ENCODE measurements at regions of chr9 and their contacts with region 1.

Region 1: DNA sequence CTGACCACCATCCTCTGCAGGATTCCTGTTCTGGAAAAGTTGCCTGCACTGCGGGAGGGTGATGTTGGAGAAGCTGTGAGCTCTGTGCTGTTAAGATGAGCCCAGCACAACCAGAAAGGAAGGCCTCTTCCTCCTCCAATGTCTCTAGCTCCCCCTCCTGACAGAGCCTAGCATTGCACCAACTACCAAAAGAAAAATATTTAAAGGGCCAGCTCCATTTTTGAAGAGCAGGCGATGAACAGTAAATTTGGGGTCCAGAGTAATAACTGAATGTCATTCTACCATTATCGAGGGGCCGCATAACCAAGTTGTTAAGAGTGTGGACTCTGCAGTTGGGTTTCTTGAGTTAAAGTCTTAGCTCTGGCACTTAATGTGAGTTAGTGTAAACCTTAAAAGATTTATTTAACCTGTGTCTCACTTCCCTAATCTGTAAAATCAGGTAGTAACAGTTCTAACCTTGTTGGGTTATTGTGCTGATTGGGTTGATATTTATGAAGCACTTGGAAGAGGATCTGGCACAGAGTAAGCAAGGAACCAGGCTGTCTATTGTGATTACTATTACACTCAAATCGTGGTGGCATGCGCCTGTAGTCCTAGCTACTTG is 3.9 kb downstream of the TEX53 start:
- DNase-seq: peak; percentile 85
- H3K4me3 Mint-ChIP-seq: no peak overlapping the region
- H3K27ac Mint-ChIP-seq: peak overlapping the region; percentile 36
- H3K4me1 Mint-ChIP-seq: peaks cover 21% of the 10 kb centered on the region
- H3K27me3 Mint-ChIP-seq: no peaks in the 10 kb centered on the region

Region 2: GRCh38 chr9:114385412-114386181 is 268.1 kb before region 1 on chr9:
- CTCF ChIA-PET with region 1: interaction called, 12 read pairs
- POLR2A ChIA-PET with region 1: interaction called, 4 read pairs
- DNase-seq: peak; percentile 93
- H3K4me3 Mint-ChIP-seq: peak overlapping the region; percentile 100
- H3K27ac Mint-ChIP-seq: peak overlapping the region; percentile 98
- H3K4me1 Mint-ChIP-seq: peaks cover 58% of the 10 kb centered on the region
- H3K27me3 Mint-ChIP-seq: no peaks in the 10 kb centered on the region

Region 3: DNA sequence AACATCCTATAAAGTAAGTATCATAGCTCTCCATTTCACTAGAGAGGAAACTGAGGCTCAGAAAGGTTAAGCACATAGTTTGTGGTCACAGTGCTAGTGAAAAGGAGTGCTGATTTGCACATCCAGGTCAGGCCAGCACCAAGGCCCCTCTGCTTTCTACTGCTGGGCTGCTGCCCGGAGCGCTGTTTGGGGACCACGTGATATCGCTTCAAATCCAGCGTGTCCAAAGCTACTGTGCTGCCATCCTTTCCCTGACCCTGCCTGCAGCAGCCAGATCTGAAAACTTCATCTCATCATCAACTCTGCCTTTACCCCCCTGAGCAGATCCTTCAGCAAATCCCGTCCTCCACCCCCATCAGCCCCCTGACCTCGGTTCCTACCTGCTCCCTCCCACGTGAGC is 225.2 kb before region 1 on chr9:
- CTCF ChIA-PET with region 1: interaction called, 54 read pairs
- POLR2A ChIA-PET with region 1: no interaction called
- DNase-seq: no peak
- H3K4me3 Mint-ChIP-seq: no peak overlapping the region
- H3K27ac Mint-ChIP-seq: no peak overlapping the region
- H3K4me1 Mint-ChIP-seq: peaks cover 3% of the 10 kb centered on the region
- H3K27me3 Mint-ChIP-seq: peaks cover 4% of the 10 kb centered on the region

Region 4: DNA sequence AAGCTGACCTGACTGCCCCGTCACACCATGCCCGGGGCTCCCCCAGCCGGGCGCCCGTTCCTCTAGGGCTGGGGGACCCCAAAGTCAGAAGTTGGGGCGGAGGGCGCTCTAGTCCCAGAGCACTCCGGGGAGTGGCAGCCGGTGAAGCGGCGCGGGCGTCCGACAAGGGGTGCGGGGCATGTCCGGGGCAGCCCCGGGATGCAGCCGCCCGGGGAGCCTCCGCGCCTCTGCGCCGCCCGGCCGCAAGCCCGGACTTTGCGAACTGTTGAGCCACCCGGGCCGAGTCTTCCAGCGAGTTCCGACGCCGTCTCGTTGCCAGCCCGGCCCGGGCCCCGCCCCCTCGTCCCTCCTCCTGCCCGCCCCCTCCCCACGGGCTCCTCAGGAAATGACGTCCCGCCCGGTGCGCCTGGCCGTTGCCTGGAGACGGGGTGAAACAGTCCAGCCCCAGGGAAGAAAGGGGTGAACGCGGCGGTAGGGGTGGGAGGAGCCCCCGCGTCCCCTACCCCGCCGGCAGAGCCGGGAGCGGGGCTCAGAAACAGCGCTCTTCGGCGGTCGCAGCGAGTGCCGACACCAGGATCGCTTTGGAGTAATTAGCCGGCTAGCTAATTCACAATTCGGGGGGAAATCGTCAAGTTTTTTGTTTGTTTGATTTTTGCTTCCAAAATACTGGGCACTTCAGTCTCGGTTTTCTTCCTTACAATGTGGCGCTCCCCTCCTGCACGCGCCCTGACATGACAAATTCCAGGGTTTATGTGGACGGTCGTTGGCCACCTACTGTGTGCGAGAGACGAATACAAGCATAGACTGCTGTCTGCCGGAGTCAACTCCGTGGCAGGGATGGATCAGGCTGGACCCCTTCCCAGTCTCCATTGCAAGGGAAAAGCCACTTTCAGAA is 148.2 kb before region 1 on chr9 and contains the start of gene WHRN:
- CTCF ChIA-PET with region 1: interaction called, 27 read pairs
- POLR2A ChIA-PET with region 1: interaction called, 3 read pairs
- DNase-seq: peak; percentile 89
- H3K4me3 Mint-ChIP-seq: peak within 1 kb of the TSS; percentile 73
- H3K27ac Mint-ChIP-seq: no peak within 1 kb of the TSS
- H3K4me1 Mint-ChIP-seq: peaks cover 31% of the 10 kb centered on the region
- H3K27me3 Mint-ChIP-seq: peaks cover 60% of the 10 kb centered on the region
- total RNA-seq, gene WHRN: 4.5 to 4.8 TPM

Region 5: DNA sequence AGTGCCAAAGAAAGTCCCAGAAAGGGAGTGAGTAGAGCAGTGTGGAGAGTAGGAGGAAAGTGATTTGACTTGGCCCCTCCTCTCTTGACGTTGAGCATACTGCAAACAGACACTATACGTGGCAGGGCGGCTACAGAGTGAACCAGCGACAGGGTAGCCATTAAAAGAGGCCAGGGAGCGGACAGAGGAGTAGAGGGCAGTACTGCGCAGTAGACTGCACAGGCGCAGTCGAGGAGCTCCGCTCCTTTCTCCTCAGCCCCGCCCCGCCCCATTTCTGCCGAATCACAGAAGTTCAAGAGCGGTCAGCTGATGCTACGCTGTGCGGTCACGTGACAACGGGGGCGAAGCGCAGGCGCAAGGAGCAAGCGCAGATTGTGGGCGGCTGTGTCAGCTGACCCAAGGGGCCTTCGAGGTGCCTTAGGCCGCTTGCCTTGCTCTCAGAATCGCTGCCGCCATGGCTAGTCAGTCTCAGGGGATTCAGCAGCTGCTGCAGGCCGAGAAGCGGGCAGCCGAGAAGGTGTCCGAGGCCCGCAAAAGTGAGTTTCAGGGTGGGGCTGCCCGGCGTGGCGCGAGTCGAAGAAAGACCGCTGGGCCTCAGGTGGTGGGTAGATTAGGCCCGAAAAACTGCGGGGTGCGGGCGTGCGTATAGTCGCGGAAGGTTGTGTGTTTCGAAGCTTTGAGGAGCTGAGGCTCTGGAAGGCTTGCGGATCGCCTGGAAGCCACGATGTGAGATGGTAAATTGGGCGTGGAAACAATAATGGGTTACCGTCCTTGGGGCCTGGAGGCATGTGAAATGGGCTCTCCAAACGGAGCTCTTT is 66.1 kb before region 1 on chr9 and contains the start of gene ATP6V1G1:
- CTCF ChIA-PET with region 1: interaction called, 121 read pairs
- POLR2A ChIA-PET with region 1: interaction called, 31 read pairs
- DNase-seq: peak; percentile 99
- H3K4me3 Mint-ChIP-seq: peak within 1 kb of the TSS; percentile 94
- H3K27ac Mint-ChIP-seq: peak within 1 kb of the TSS; percentile 92
- H3K4me1 Mint-ChIP-seq: peaks cover 49% of the 10 kb centered on the region
- H3K27me3 Mint-ChIP-seq: no peaks in the 10 kb centered on the region
- total RNA-seq, gene ATP6V1G1: 92.4 to 94.2 TPM

Region 6: DNA sequence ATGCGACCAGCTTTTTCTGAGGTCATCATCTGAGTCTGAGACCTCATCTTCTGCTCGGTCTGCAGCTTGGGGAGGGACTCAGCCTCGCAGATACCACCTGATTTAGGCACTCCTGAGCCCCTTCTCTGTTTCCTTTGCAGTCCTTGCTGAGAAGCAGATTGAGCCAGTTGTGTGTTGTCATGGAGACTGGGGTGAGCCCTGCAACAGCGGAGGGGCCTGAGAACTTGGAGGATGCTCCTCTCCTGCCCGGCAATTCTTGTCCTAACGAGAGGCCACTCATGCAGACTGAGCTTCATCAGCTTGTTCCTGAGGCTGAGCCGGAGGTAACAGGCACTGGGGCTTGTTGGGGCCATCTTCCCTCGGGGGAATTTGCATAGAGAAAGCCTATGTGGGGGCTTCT is 15.3 kb before region 1 on chr9:
- CTCF ChIA-PET with region 1: interaction called, 16 read pairs
- POLR2A ChIA-PET with region 1: interaction called, 3 read pairs
- DNase-seq: no peak
- H3K4me3 Mint-ChIP-seq: no peak overlapping the region
- H3K27ac Mint-ChIP-seq: no peak overlapping the region
- H3K4me1 Mint-ChIP-seq: no peaks in the 10 kb centered on the region
- H3K27me3 Mint-ChIP-seq: no peaks in the 10 kb centered on the region

Region 7: DNA sequence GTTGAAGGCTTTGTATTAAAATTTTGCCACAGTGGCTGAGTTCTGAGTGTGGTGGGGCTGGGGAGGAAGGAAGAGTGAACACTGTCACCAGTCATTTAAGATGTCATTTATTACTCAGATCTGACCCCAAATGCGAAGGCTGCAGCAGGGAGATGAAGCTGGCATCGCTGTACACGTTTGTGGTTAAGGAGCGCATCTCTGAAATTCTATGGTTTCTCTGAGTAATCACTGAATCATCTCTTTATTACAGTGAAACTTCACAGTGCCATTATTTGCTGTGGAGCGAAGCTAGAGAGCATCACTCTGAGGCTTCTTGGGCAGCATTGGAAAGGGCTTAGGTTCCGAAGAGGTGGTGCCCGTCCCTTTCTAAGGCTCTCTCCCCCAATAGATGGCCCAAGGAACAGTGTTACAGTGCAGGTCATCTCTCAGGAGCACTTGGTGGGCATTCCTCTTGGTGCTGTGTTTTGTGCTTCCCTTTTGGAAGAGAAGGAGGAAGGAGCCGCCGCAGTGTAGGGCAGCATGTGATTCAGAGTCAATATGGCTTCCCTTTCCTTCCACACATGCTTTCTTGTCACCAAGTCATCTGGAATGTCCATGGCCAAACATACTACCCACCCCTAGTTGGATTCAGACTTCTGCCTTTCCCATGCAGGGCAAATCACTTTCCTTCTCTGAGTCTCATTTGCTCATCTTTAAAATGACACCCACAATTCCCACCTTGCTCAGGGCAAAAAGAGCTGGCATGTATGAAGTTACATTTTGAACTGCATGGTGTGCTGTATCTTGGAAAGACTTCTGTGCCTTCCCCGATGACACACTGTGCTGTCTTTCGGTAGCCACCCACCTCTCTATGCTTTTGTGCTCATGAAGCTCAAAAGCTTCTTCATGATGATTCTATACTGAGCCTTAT is 37.6 kb after region 1 on chr9:
- CTCF ChIA-PET with region 1: no interaction called
- POLR2A ChIA-PET with region 1: no interaction called
- DNase-seq: peak; percentile 87
- H3K4me3 Mint-ChIP-seq: peak overlapping the region; percentile 26
- H3K27ac Mint-ChIP-seq: peak overlapping the region; percentile 93
- H3K4me1 Mint-ChIP-seq: peaks cover 95% of the 10 kb centered on the region
- H3K27me3 Mint-ChIP-seq: peaks cover 33% of the 10 kb centered on the region

Region 8: GRCh38 chr9:114754581-114754980 is 100.9 kb after region 1 on chr9:
- CTCF ChIA-PET with region 1: no interaction called
- POLR2A ChIA-PET with region 1: no interaction called
- DNase-seq: no peak
- H3K4me3 Mint-ChIP-seq: no peak overlapping the region
- H3K27ac Mint-ChIP-seq: no peak overlapping the region
- H3K4me1 Mint-ChIP-seq: peaks cover 12% of the 10 kb centered on the region
- H3K27me3 Mint-ChIP-seq: peaks cover 4% of the 10 kb centered on the region

Measured in activated CD4-positive, alpha-beta memory T cell treated with anti-CD3 and anti-CD28 coated beads, Interleukin-2, amount 10 ng/mL, durations not matched to agents 7 days and 5 days (primary cell).